ENCODE measurements at regions of chr3 and their contacts with region 1.

Region 1: GRCh38 chr3:46089237-46090011 is 62.1 kb upstream of the XCR1 start:
- DNase-seq: peak; percentile 78
- ATAC-seq: peak; percentile 90
- H3K4me3 ChIP-seq: no peak overlapping the region
- H3K27ac ChIP-seq: peak overlapping the region; percentile 20; the same call in 1 of the 2 replicates
- H3K4me1 ChIP-seq: peaks cover 58% of the 10 kb centered on the region
- H3K27me3 ChIP-seq: no peaks in the 10 kb centered on the region
- CTCF ChIP-seq: no peak
- EP300 ChIP-seq: peak; percentile 24 to 75; a peak in 2 of 4 replicates
- POLR2A ChIP-seq: no peak
- RAD21 ChIP-seq: 0 out of 2 replicates have a peak, but pooled peaks have one; percentile 5

Region 2: GRCh38 chr3:45760878-45761711 is 328.3 kb before region 1 on chr3:
- CTCF ChIA-PET with region 1: no interaction called
- POLR2A ChIA-PET with region 1: no interaction called
- RAD21 ChIA-PET with region 1: no interaction called
- SMC1A ChIA-PET with region 1: no interaction called
- in situ Hi-C with region 1: loop called (anchors 5 kb)
- intact Hi-C with region 1: no loop called
- DNase-seq: peak; percentile 5
- ATAC-seq: peak; percentile 98
- H3K4me3 ChIP-seq: no peak overlapping the region
- H3K27ac ChIP-seq: no peak overlapping the region
- H3K4me1 ChIP-seq: no peaks in the 10 kb centered on the region
- H3K27me3 ChIP-seq: 0 out of 4 replicates have a peak, but pooled peaks cover 0 to 2% of the 10 kb centered on the region in 2 experiments
- CTCF ChIP-seq: peak; percentile 80 to 89 (median 83)
- EP300 ChIP-seq: no peak
- POLR2A ChIP-seq: no peak
- RAD21 ChIP-seq: peak; percentile 87

Region 3: DNA sequence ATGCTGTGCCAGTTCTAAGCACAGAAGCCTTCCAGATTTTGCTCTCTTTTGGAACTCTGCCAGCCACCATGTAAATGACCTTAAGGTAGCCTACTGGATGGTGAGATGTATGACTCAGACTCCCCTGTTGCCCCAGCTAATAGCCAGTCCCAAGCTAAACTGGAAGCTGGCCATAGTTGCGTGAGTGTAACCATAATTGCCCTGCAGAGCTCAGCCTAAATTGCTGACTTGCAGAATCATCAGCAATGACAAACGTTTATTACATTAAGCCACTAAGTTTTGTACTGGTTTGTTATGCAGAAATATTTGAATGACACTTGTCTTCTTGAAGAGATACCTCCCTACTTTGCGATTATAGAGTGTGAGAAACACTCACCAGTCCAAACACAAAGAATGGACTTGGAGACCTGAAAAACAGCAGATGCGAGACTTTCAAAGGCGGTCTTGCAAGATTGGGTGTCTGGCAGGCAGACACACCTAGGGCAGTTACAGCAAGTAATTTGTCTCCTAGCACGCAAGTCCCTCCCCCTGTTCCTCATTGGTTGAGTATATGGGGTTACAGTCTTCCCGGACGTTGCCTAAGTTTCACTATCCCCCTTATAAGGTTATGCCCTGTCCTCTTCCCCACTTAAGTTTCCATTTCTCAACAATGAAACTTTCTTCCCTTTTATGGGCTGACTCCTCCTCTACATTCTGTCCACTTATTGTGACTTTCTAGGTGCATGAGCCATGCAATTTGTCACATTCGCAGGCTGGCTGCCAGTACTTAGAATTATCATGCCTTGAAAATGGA is 21.5 kb after region 1 on chr3:
- CTCF ChIA-PET with region 1: interaction called, 4 read pairs
- POLR2A ChIA-PET with region 1: interaction called, 3 read pairs
- RAD21 ChIA-PET with region 1: interaction called, 5 read pairs
- SMC1A ChIA-PET with region 1: interaction called, 6 read pairs
- in situ Hi-C with region 1: no loop called
- intact Hi-C with region 1: loop called (anchors 2 kb)
- DNase-seq: peak; percentile 97
- ATAC-seq: peak; percentile 95
- H3K4me3 ChIP-seq: peak overlapping the region; percentile 39; the same call in 1 of the 2 replicates
- H3K27ac ChIP-seq: peak overlapping the region; percentile 99
- H3K4me1 ChIP-seq: peaks cover 40% of the 10 kb centered on the region
- H3K27me3 ChIP-seq: no peaks in the 10 kb centered on the region
- CTCF ChIP-seq: no peak
- EP300 ChIP-seq: no peak; a peak in 1 of 4 replicates
- POLR2A ChIP-seq: peak; percentile 84
- RAD21 ChIP-seq: no peak

Region 4: GRCh38 chr3:46186471-46187340 is 97.3 kb after region 1 on chr3:
- CTCF ChIA-PET with region 1: interaction called, 23 read pairs
- POLR2A ChIA-PET with region 1: interaction called, 4 read pairs
- RAD21 ChIA-PET with region 1: interaction called, 35 read pairs
- SMC1A ChIA-PET with region 1: interaction called, 44 read pairs
- in situ Hi-C with region 1: no loop called
- intact Hi-C with region 1: no loop called
- DNase-seq: peak; percentile 87
- ATAC-seq: peak; percentile 94
- H3K4me3 ChIP-seq: 0 out of 2 replicates have a peak overlapping the region, but pooled peaks have one; percentile 6
- H3K27ac ChIP-seq: peak overlapping the region; percentile 71
- H3K4me1 ChIP-seq: peaks cover 33% of the 10 kb centered on the region
- H3K27me3 ChIP-seq: no peaks in the 10 kb centered on the region
- CTCF ChIP-seq: no peak
- EP300 ChIP-seq: peak in 1 of 2 experiments; percentile 54; a peak in 2 of 4 replicates
- POLR2A ChIP-seq: no peak
- RAD21 ChIP-seq: no peak

Region 5: GRCh38 chr3:46297658-46298463 is 208.4 kb after region 1 on chr3:
- CTCF ChIA-PET with region 1: interaction called, 3 read pairs
- POLR2A ChIA-PET with region 1: interaction called, 5 read pairs
- RAD21 ChIA-PET with region 1: interaction called, 4 read pairs
- SMC1A ChIA-PET with region 1: interaction called, 6 read pairs
- in situ Hi-C with region 1: no loop called
- intact Hi-C with region 1: loop called (anchors 5 kb)
- DNase-seq: no peak
- ATAC-seq: peak; percentile 20
- H3K4me3 ChIP-seq: no peak overlapping the region
- H3K27ac ChIP-seq: peak overlapping the region; percentile 47; the same call in 1 of the 2 replicates
- H3K4me1 ChIP-seq: peaks cover 68% of the 10 kb centered on the region
- H3K27me3 ChIP-seq: no peaks in the 10 kb centered on the region
- CTCF ChIP-seq: no peak
- EP300 ChIP-seq: no peak
- POLR2A ChIP-seq: no peak
- RAD21 ChIP-seq: no peak

Region 6: GRCh38 chr3:46538803-46539442 is 449.5 kb after region 1 on chr3:
- CTCF ChIA-PET with region 1: interaction called, 3 read pairs
- POLR2A ChIA-PET with region 1: no interaction called
- RAD21 ChIA-PET with region 1: no interaction called
- SMC1A ChIA-PET with region 1: no interaction called
- in situ Hi-C with region 1: no loop called
- intact Hi-C with region 1: loop called (anchors 10 kb)
- DNase-seq: peak; percentile 97
- ATAC-seq: peak; percentile 92
- H3K4me3 ChIP-seq: peak overlapping the region; percentile 57; the same call in 1 of the 2 replicates
- H3K27ac ChIP-seq: peak overlapping the region; percentile 90
- H3K4me1 ChIP-seq: peaks cover 39% of the 10 kb centered on the region
- H3K27me3 ChIP-seq: no peaks in the 10 kb centered on the region
- CTCF ChIP-seq: no peak
- EP300 ChIP-seq: peak; percentile 99
- POLR2A ChIP-seq: no peak
- RAD21 ChIP-seq: 0 out of 2 replicates have a peak, but pooled peaks have one; percentile 6